H1 (cell line): ENCODE measurements at regions of chr1 and their contacts with region 1.

Region 1: DNA sequence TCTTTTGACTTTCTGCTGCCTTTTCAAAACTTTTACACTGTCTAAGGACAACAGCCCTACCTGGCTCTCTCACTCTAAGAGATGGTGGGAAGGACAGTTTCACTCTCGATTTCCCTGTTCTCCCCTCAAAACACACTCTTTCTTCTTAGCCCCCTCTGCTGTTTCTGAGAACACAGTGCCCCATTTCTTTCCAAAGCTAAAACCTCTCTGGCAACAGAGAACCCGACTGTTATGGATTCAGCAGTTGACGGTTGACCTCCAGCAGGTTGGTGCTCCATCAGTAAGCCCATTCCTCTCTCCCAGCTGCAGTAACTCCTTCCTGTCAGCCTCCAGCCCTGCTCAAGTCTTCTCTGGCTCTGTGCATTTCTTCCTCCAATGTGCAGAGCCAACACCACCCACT is 88.2 kb upstream of the ABCD3 start:
- DNase-seq: no peak
- H3K4me3 ChIP-seq: no peak overlapping the region
- H3K27ac ChIP-seq: no peak overlapping the region
- H3K4me1 ChIP-seq: peaks cover 6 to 10% (median 8%) of the 10 kb centered on the region in 4 experiments; a peak in 6 of 7 replicates
- H3K27me3 ChIP-seq: no peaks in the 10 kb centered on the region; a peak in 1 of 7 replicates
- CTCF ChIP-seq: peak in 2 of 3 experiments; percentile 59 to 61; a peak in 3 of 4 replicates
- EP300 ChIP-seq: no peak
- POLR2A ChIP-seq: no peak
- RAD21 ChIP-seq: peak; percentile 57 to 75

Region 2: GRCh38 chr1:94228640-94229375 is 101.2 kb before region 1 on chr1:
- CTCF ChIA-PET with region 1: interaction called, 15 read pairs
- POLR2A ChIA-PET with region 1: no interaction called
- DNase-seq: no peak
- H3K4me3 ChIP-seq: no peak overlapping the region
- H3K27ac ChIP-seq: no peak overlapping the region
- H3K4me1 ChIP-seq: no peaks in the 10 kb centered on the region
- H3K27me3 ChIP-seq: no peaks in the 10 kb centered on the region
- CTCF ChIP-seq: no peak
- EP300 ChIP-seq: no peak
- POLR2A ChIP-seq: no peak
- RAD21 ChIP-seq: no peak

Region 3: GRCh38 chr1:94237291-94238226 is 92.4 kb before region 1 on chr1 and contains the start of gene ARHGAP29:
- CTCF ChIA-PET with region 1: interaction called, 82 read pairs
- POLR2A ChIA-PET with region 1: no interaction called
- DNase-seq: peak in 1 of 2 experiments; percentile 89
- H3K4me3 ChIP-seq: peak within 1 kb of the TSS; percentile 53 to 84 (median 70)
- H3K27ac ChIP-seq: no peak within 1 kb of the TSS
- H3K4me1 ChIP-seq: peaks cover 0 to 2% (median 0%) of the 10 kb centered on the region in 4 experiments; a peak in 1 of 7 replicates
- H3K27me3 ChIP-seq: peaks cover 17 to 40% (median 32%) of the 10 kb centered on the region in 4 experiments
- CTCF ChIP-seq: peak in 1 of 3 experiments; percentile 11; a peak in 2 of 4 replicates
- EP300 ChIP-seq: no peak
- POLR2A ChIP-seq: peak in 1 of 2 experiments; percentile 76; a peak in 2 of 3 replicates
- RAD21 ChIP-seq: peak; percentile 20 to 22; a peak in 2 of 4 replicates
- total RNA-seq, gene ARHGAP29: 2.9 and 3.2 TPM in 2 replicates

Region 4: GRCh38 chr1:94316836-94317789 is 12.9 kb before region 1 on chr1:
- CTCF ChIA-PET with region 1: interaction called, 26 read pairs
- POLR2A ChIA-PET with region 1: no interaction called
- DNase-seq: no peak
- H3K4me3 ChIP-seq: no peak overlapping the region
- H3K27ac ChIP-seq: no peak overlapping the region
- H3K4me1 ChIP-seq: peaks cover 0 to 3% (median under 1%) of the 10 kb centered on the region in 4 experiments; a peak in 3 of 7 replicates
- H3K27me3 ChIP-seq: no peaks in the 10 kb centered on the region
- CTCF ChIP-seq: no peak
- EP300 ChIP-seq: no peak
- POLR2A ChIP-seq: no peak
- RAD21 ChIP-seq: no peak